Keratinocyte (primary cell): ENCODE measurements at regions of chr1 and their contacts with region 1.

Region 1: DNA sequence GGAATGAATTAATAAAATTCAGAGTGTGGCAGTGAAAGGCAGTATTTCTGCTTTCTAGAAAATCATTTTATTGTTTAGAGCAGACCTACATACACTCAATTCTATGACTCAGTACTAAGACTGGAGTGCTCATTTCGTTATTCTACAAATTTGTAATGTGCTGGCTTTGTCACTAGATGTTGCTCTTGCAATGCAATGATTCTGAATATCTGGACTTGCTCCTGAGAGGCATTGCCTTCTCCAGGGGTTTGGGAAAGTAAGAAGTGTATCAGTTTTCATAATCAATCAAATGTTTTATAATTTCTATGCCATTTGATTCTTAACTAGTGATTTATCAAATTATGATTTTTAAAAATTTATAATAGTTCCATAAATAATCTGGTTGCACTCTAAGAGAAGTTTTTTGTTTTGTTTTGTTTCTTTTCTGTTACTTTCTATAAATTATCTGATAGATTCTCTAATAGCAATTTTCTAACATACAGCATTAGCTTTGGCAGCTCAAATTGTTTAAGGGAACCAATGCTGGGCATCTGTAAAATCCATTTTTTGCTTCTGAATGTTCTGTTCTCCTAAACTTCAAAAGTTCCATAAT is 280.5 kb upstream of the SGIP1 start:
- DNase-seq: no peak
- H3K4me3 ChIP-seq: no peak overlapping the region
- H3K27ac ChIP-seq: no peak overlapping the region
- H3K4me1 ChIP-seq: peaks cover 11% of the 10 kb centered on the region
- H3K27me3 ChIP-seq: no peaks in the 10 kb centered on the region
- CTCF ChIP-seq: peak; percentile 49 to 69 (median 56)

Region 2: GRCh38 chr1:66154394-66154793 is 99.0 kb before region 1 on chr1:
- dilution Hi-C with region 1: no loop called
- DNase-seq: no peak
- H3K4me3 ChIP-seq: no peak overlapping the region
- H3K27ac ChIP-seq: no peak overlapping the region
- H3K4me1 ChIP-seq: no peaks in the 10 kb centered on the region
- H3K27me3 ChIP-seq: no peaks in the 10 kb centered on the region
- CTCF ChIP-seq: no peak

Region 3: GRCh38 chr1:66464802-66465201 is 211.4 kb after region 1 on chr1:
- dilution Hi-C with region 1: loop called (anchors 25 kb)
- DNase-seq: peak; percentile 90
- H3K4me3 ChIP-seq: no peak overlapping the region
- H3K27ac ChIP-seq: peak overlapping the region; percentile 51
- H3K4me1 ChIP-seq: peaks cover 15% of the 10 kb centered on the region
- H3K27me3 ChIP-seq: no peaks in the 10 kb centered on the region
- CTCF ChIP-seq: no peak